ENCODE measurements at regions of chr11 and their contacts with region 1.

Region 1: DNA sequence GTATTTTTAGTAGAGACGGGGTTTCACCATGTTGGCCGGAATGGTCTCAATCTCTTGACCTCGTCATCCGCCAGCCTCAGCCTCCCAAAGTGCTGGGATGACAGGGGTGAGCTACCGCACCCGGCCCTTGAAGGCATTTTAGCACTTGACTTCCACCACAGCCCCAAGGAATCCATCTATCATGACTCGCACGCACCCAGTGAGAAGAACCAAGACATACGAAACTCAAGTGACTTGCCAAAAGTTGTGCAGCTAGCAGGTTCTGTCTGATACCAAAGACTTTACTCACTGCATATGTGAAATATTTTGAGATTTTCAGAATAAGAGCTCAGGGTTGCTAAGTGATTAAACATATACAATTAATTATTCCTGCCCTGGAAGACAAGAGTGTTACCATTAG is 21.0 kb downstream of the FLI1 start:
- DNase-seq: peak; percentile 70
- H3K4me3 ChIP-seq: no peak overlapping the region
- H3K27ac ChIP-seq: peak overlapping the region; percentile 98
- H3K4me1 ChIP-seq: peaks cover 95% of the 10 kb centered on the region
- H3K27me3 ChIP-seq: no peaks in the 10 kb centered on the region
- CTCF ChIP-seq: no peak
- POLR2A ChIP-seq: no peak

Region 2: GRCh38 chr11:128725630-128726319 is 10.9 kb after region 1 on chr11:
- CTCF ChIA-PET with region 1: interaction called, 11 read pairs
- POLR2A ChIA-PET with region 1: interaction called, 16 read pairs
- dilution Hi-C with region 1: no loop called
- intact Hi-C with region 1: loop called (anchors 1 kb)
- DNase-seq: no peak
- H3K4me3 ChIP-seq: no peak overlapping the region
- H3K27ac ChIP-seq: no peak overlapping the region
- H3K4me1 ChIP-seq: peaks cover 56% of the 10 kb centered on the region
- H3K27me3 ChIP-seq: no peaks in the 10 kb centered on the region
- CTCF ChIP-seq: no peak
- POLR2A ChIP-seq: no peak

Measured in endothelial cell of umbilical vein (primary cell).